Calu3 (cell line): ENCODE measurements at regions of chr3 and their contacts with region 1.

Region 1: DNA sequence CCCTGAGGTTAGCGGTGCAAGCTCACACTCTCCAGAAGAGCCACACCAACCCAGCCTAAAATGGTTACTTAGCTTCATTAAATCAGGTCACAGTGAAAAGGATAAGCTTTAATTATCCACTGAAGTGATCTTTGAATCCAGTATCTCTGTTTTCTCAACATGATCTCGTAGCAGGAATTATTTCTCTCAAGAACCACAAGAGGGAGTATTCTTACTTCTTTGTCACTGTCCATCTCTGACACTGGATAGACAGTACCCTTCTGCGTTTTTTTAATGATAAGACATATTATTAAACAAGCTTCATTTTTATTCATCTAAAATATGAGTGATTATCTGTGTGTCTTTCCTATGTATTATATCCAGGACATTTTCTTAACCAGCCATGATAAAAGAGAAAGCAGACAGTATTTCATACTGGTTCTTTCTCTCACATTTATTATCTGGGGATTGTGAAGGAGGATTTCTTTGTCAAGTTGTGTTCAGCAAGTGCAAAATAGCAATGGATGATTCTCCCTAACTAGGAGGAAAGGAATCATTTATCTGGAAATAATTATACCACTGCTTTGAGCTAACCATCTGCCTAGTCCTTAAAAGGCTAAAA is 105.4 kb upstream of the CCDC54 start:
- DNase-seq: no peak
- H3K4me3 Mint-ChIP-seq: no peak overlapping the region
- H3K27ac Mint-ChIP-seq: no peak overlapping the region
- H3K4me1 Mint-ChIP-seq: peaks cover 8% of the 10 kb centered on the region
- H3K27me3 Mint-ChIP-seq: no peaks in the 10 kb centered on the region
- CTCF ChIP-seq: peak; percentile 62

Region 2: GRCh38 chr3:107421170-107421792 is 149.4 kb after region 1 on chr3:
- CTCF ChIA-PET with region 1: interaction called, 24 read pairs
- intact Hi-C with region 1: loop called (anchors 2 kb)
- DNase-seq: peak; percentile 28
- H3K4me3 Mint-ChIP-seq: peak overlapping the region; percentile 59
- H3K27ac Mint-ChIP-seq: peak overlapping the region; percentile 17
- H3K4me1 Mint-ChIP-seq: peaks cover 20% of the 10 kb centered on the region
- H3K27me3 Mint-ChIP-seq: no peaks in the 10 kb centered on the region
- CTCF ChIP-seq: peak; percentile 29

Region 3: DNA sequence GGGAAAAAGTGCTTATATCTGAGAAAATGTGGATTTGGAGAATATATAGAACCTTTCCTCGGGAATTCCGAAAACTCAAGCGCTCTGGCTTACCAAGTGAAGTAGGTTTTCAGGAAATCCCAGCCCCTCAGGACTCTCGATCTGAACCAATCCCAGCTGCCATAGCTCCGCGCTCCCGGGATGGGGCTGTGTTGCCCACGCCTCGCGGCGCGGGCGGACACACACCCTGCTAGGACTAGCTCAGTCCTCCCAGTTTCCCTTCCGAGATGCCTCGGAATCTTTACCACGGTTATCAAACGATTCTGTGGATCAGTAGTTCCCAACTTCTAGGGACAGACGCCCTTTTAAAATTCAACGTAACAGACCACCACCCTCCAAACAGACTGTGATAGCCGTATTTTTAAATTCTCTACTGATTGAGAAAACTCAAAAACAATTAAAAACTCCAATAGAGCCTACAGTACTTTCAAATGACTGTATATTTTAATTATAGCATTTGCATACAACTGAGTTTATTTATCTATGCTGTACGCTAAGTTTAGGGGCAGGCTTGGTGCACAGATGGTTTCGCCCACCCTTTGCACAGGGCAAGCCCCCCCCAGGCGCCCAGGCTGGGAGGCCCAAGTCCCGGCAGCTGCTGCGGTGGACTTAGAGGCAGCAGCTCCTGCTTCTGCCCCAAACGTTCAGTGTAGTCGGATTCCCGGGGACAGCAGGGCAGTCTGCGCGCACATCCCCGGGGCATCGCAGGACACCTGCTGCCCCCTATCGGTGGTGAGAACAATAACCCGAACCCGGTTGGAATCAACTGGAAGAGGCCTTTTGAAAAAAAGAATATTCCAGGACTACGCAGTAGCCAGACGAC is 157.7 kb after region 1 on chr3:
- CTCF ChIA-PET with region 1: interaction called, 16 read pairs
- intact Hi-C with region 1: no loop called
- DNase-seq: peak; percentile 79
- H3K4me3 Mint-ChIP-seq: peak overlapping the region; percentile 71
- H3K27ac Mint-ChIP-seq: no peak overlapping the region
- H3K4me1 Mint-ChIP-seq: no peaks in the 10 kb centered on the region
- H3K27me3 Mint-ChIP-seq: no peaks in the 10 kb centered on the region
- CTCF ChIP-seq: peak; percentile 66

Region 4: GRCh38 chr3:107522510-107523288 is 250.8 kb after region 1 on chr3 and contains the start of gene BBX:
- CTCF ChIA-PET with region 1: no interaction called
- intact Hi-C with region 1: loop called (anchors 10 kb)
- DNase-seq: peak; percentile 90
- H3K4me3 Mint-ChIP-seq: peak within 1 kb of the TSS; percentile 98
- H3K27ac Mint-ChIP-seq: peak within 1 kb of the TSS; percentile 94
- H3K4me1 Mint-ChIP-seq: no peaks in the 10 kb centered on the region
- H3K27me3 Mint-ChIP-seq: no peaks in the 10 kb centered on the region
- CTCF ChIP-seq: no peak
- total RNA-seq, gene BBX: 66.9 and 72.2 TPM in 2 replicates